Left cardiac atrium (tissue), 4 donors: ENCODE measurements at regions of chr9 and their contacts with region 1.

Region 1: DNA sequence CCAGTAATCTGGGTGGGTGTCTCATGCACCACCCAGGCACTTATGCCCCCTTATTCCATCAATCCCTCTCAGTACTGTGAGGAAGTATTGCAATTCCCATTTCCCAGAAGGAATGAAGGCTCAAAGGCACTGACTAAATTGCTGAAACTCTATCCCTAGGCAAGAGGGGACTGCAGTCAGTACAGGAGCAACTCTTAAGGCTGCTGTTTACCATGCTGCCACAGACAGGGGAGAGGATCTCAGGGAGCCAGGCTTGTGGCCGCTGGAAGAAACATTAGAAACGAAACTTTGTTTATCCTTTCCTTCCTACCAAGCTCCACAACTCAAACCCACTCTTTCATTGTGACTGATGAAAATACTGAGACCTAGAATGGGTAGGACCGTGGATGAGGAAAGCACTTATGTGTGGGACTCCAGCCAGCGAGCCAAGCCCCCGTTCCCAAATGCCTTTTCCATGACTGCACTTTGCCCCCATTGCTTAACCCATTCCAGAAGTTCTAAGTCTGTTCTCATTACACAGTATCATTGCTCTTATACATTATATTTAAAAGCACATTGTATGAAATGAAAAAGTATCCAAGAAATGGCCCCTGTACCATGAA is 54.3 kb downstream of the TLE1 start:
- DNase-seq: no peak
- ATAC-seq: no peak

Region 2: DNA sequence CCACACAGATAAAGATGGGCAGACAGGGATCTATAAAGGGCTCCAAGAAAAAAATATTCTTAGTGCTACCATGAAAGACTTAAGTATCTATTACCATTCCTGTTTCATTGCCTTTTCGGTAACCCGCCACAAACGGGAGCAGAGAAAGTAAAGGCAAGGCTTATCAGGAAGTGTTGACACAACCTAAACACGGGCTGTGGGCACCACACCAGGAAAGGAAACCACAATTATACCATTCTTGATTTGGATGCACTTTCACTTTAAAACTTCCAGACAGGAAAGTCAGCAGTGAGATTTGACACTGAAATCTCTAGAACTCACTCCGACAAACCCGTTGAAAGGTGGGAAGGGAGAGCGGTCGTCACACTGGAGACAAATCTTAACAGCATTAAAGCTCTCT is 47.8 kb after region 1 on chr9:
- intact Hi-C with region 1: loop called in 1 of 2 experiments (anchors 5 kb)
- DNase-seq: no peak
- ATAC-seq: no peak